H1 (cell line): ENCODE measurements at regions of chr7 and their contacts with region 1.

Region 1: DNA sequence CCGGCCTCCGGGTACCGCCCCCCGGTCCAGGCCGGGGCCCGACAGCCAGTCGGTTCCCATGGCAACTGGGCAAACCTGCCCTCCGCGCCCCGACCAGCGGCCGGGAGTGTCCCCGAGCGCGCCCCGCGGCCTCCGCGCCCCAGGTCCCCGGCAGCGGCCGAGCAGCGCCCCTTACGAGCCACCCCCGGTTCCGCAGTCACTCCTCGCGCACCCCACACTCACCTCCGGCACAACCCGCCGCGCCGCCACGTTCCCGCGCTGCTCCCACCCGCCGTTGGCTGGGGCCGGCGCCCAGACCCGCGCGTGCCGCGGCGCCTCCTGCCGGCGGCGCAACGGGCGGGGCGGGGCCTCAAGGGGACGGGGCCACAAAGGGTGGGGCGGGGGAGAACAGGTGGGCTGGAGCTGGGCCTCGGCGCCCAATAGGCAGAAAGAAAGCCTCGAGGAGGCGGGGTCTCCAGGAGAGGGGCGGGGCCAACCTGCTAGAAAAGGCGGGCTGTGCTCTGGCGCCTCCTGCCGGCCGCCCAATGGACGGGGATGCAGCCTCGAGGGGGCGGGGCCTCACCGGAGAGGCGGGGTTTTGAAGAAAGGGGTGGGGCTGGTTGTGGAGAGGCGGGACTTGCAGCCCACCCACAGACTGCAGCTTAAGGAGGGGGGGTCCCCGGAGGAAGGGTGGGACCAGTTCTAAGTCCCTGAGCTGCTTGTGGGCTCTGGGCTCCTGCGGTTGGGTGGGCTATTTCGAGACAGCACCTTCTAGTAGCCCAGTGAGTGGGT is at the start of gene RADIL:
- DNase-seq: peak; percentile 84 to 99
- H3K4me3 ChIP-seq: peak within 1 kb of the TSS; percentile 41 to 63 (median 56)
- H3K27ac ChIP-seq: no peak within 1 kb of the TSS
- H3K4me1 ChIP-seq: peaks cover 0 to 5% (median 2%) of the 10 kb centered on the region in 4 experiments; a peak in 3 of 7 replicates
- H3K27me3 ChIP-seq: peaks cover 0 to 9% (median 2%) of the 10 kb centered on the region in 4 experiments; a peak in 2 of 7 replicates
- CTCF ChIP-seq: peak; percentile 75 to 81 (median 78)
- EP300 ChIP-seq: no peak
- POLR2A ChIP-seq: no peak
- RAD21 ChIP-seq: peak; percentile 62 to 67
- total RNA-seq, gene RADIL: 5.0 and 5.4 TPM in 2 replicates

Region 2: GRCh38 chr7:4797858-4798705 is 85.5 kb before region 1 on chr7:
- CTCF ChIA-PET with region 1: interaction called, 16 read pairs
- POLR2A ChIA-PET with region 1: no interaction called
- DNase-seq: peak in 1 of 2 experiments; percentile 94
- H3K4me3 ChIP-seq: no peak overlapping the region
- H3K27ac ChIP-seq: no peak overlapping the region
- H3K4me1 ChIP-seq: no peaks in the 10 kb centered on the region
- H3K27me3 ChIP-seq: no peaks in the 10 kb centered on the region
- CTCF ChIP-seq: peak; percentile 89 to 99 (median 99)
- EP300 ChIP-seq: no peak
- POLR2A ChIP-seq: no peak
- RAD21 ChIP-seq: peak; percentile 84 to 89

Region 3: DNA sequence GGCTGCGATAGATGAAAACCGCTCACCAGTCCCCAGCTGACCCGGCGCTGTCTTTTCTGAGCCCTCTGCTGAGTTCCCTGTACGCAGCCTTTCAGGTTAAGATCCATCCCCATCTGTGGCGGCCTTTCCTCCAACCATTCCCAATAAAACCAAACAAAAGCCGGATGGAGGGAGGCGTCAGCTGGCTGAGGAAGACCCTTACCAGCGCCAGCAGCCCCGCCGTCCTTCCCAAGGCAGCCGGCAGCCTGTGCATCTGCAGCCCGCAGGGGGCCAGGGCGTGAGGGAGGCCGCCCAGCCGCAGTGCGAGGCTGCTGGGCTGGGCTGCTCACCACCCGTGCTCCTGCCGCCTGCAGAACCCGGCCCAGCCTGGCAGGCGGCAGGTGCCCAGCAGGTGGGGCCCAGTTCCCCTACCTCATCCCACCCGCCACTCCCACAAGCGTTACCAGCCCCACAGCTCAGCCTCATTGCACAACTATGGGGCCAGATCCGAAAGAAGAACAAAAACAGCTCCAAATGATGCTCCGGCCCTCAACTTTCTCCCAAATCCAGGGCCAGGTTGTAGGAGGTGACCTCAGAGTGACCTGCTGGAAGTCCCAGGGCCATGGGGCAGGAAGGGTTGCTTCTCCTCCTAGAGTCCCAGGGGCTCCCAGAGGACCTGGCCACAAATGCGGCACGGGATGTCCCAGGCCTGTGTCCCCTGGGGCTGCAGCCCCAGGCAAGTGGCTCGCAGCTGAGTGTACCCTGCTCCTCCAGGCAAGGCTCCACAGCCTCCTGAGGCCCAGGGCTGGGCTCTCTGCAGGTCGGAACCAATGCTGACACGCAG is 45.5 kb before region 1 on chr7:
- CTCF ChIA-PET with region 1: interaction called, 47 read pairs
- POLR2A ChIA-PET with region 1: interaction called, 3 read pairs
- DNase-seq: peak in 1 of 2 experiments; percentile 50
- H3K4me3 ChIP-seq: no peak overlapping the region
- H3K27ac ChIP-seq: no peak overlapping the region
- H3K4me1 ChIP-seq: peaks cover 0 to 4% (median 0%) of the 10 kb centered on the region in 4 experiments; a peak in 1 of 7 replicates
- H3K27me3 ChIP-seq: no peaks in the 10 kb centered on the region
- CTCF ChIP-seq: no peak
- EP300 ChIP-seq: no peak
- POLR2A ChIP-seq: no peak
- RAD21 ChIP-seq: no peak

Region 4: GRCh38 chr7:4873071-4873944 is 10.3 kb before region 1 on chr7:
- CTCF ChIA-PET with region 1: interaction called, 10 read pairs
- POLR2A ChIA-PET with region 1: no interaction called
- DNase-seq: no peak
- H3K4me3 ChIP-seq: no peak overlapping the region
- H3K27ac ChIP-seq: no peak overlapping the region
- H3K4me1 ChIP-seq: peaks cover 0 to 10% (median 4%) of the 10 kb centered on the region in 4 experiments; a peak in 2 of 7 replicates
- H3K27me3 ChIP-seq: no peaks in the 10 kb centered on the region
- CTCF ChIP-seq: no peak
- EP300 ChIP-seq: no peak
- POLR2A ChIP-seq: no peak
- RAD21 ChIP-seq: no peak

Region 5: GRCh38 chr7:5348134-5349004 is 464.8 kb after region 1 on chr7:
- CTCF ChIA-PET with region 1: no interaction called
- POLR2A ChIA-PET with region 1: no interaction called
- DNase-seq: no peak
- H3K4me3 ChIP-seq: peak overlapping the region in 1 of 4 experiments; percentile 57; a peak in 2 of 8 replicates
- H3K27ac ChIP-seq: no peak overlapping the region
- H3K4me1 ChIP-seq: peaks cover 2 to 29% (median 15%) of the 10 kb centered on the region in 4 experiments
- H3K27me3 ChIP-seq: peaks cover 19 to 54% (median 52%) of the 10 kb centered on the region in 4 experiments
- CTCF ChIP-seq: peak in 2 of 3 experiments; percentile 32 to 45; a peak in 2 of 4 replicates
- EP300 ChIP-seq: no peak
- POLR2A ChIP-seq: no peak
- RAD21 ChIP-seq: peak; percentile 29 to 40; a peak in 3 of 4 replicates